Right ventricle myocardium inferior (tissue), 1 donor: ENCODE measurements at regions of chr16 and their contacts with region 1.

Region 1: DNA sequence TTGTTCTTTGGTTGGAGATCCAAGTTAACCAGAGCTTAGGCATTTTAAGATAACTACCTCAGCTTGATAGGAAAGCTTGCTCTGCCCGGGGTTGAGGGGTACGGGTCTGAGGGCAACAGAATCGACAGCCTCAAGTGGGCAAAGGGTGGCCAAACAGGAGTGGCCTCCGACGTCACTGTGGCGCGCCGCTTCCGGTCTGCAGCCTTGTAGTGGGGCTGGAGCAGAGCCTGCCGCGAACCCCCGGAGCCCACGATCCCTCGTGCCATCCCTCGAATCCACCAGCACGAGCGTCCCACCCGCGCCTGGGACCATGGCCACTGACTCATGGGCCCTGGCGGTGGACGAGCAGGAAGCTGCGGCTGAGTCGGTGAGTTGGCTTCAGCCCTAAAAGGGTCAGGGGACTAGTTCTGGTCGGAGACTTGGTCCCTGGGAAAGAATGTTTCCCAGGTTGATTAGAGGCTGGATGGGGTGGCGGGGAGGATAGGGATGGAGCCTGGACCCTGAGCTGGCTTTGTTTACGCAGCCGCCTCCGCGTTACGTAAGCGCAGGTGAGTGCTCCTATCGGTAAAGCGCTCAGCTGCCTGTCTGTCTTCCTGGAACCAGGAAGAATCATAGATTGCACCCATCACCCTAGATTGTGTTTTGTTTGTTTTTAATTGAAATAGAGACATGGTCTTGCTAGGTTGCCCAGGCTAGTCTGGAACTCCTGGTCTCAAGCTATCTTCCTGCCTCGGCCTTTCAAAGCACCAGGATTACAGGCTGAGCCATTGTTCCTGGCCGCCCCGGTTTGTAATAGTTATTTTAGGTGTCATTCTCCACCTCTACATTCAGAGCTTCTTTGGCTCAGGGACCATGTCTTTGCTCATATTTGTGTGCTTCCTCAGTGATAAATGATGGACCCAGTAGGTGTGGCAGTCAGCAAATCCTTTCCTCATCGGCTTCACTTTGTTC is at the start of gene DDX19B:
- DNase-seq: peak; percentile 92
- ATAC-seq: peak; percentile 94
- total RNA-seq, gene DDX19B: 14.1 TPM

Region 2: GRCh38 chr16:70251629-70252354 is 47.5 kb before region 1 on chr16 and contains the start of gene EXOSC6:
- intact Hi-C with region 1: no loop called
- DNase-seq: peak; percentile 97
- ATAC-seq: peak; percentile 98
- total RNA-seq, gene EXOSC6: 11.0 TPM

Region 3: GRCh38 chr16:70345840-70346239 is 46.6 kb after region 1 on chr16:
- intact Hi-C with region 1: loop called (anchors 2 kb)
- DNase-seq: no peak
- ATAC-seq: no peak